ENCODE measurements at regions of chr13 and their contacts with region 1.

Region 1: DNA sequence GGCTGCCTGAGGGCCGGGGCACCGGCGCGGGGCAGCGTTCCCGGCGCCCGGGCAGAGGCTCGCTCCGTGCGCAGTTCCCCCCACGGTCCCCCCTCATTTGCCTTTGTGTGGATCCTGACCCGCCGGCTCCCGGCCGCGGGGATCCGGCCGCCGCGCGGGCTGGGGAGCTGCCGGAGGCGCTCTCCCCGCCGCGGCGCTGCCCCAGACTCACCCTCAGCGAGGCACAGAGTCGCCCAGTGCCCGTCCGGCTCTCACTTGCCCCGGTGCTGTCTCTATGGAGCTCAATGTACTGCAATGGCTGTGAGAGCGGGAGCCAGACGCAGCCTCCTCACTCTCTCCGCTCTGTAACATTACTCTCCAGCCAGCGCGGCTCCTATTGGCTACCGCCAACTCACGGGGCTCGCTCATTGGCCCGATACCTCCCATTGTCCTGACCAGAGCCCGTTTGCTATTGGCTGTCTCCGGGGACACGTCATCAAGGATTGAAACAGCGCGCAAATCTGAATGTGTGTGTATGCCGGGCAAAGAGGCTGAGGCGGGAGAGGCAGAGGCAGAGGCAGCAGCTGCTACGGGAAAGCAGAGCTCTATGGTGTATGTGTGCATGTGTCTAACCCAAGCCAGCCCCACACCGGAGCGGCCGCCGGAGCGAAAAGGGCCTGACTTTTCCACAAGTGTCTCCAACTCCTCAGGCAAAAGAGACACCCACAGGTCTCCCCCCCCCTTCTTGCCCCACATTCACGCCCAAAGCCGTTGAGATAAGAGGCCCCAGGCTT is at the start of gene HMGB1:
- DNase-seq: peak; percentile 97
- ATAC-seq: peak; percentile 82
- H3K4me3 ChIP-seq: peak within 1 kb of the TSS; percentile 21 to 86 (median 78)
- H3K4me3 Mint-ChIP-seq: peak within 1 kb of the TSS; percentile 98
- H3K27ac ChIP-seq: peak within 1 kb of the TSS; percentile 54 to 91
- H3K27ac Mint-ChIP-seq: peak within 1 kb of the TSS; percentile 100
- H3K4me1 ChIP-seq: peaks cover 33 to 38% of the 10 kb centered on the region in 2 donors
- H3K4me1 Mint-ChIP-seq: peaks cover 38% of the 10 kb centered on the region
- H3K27me3 ChIP-seq: no peaks in the 10 kb centered on the region
- H3K27me3 Mint-ChIP-seq: no peaks in the 10 kb centered on the region
- CTCF ChIP-seq: no peak
- total RNA-seq, gene HMGB1: 483 and 529 TPM in 2 replicates

Region 2: DNA sequence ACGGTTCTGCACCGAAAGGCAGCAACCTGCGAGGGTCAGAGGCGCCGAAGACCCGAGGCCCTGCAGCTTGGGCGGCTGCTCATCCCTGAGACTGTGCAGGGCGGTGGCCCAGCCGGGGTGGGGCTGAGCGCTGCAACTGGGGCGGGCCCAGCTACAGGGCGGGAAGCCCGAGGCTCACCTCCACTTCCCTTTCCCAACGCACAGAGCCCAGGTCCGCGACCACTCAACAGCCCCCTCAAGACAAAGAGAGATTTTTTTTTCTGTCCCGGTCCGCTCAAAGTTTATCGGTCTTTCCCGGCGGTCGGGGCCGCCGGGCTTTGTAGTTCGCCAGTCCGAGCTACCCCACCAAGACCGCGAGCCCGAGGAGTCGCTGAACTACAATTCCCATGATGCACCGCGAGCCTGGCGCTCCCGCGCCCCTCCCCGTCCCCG is 159.0 kb before region 1 on chr13:
- CTCF ChIA-PET with region 1: interaction called, 3 read pairs
- POLR2A ChIA-PET with region 1: no interaction called
- intact Hi-C with region 1: loop called (anchors 2 kb)
- DNase-seq: peak; percentile 96
- ATAC-seq: peak; percentile 89
- H3K4me3 ChIP-seq: peak overlapping the region; percentile 70 to 97 (median 83)
- H3K4me3 Mint-ChIP-seq: peak overlapping the region; percentile 85
- H3K27ac ChIP-seq: peak overlapping the region; percentile 71 to 87
- H3K27ac Mint-ChIP-seq: peak overlapping the region; percentile 86
- H3K4me1 ChIP-seq: peaks cover 28 to 45% of the 10 kb centered on the region in 2 donors
- H3K4me1 Mint-ChIP-seq: peaks cover 55% of the 10 kb centered on the region
- H3K27me3 ChIP-seq: no peaks in the 10 kb centered on the region
- H3K27me3 Mint-ChIP-seq: no peaks in the 10 kb centered on the region
- CTCF ChIP-seq: no peak

Region 3: DNA sequence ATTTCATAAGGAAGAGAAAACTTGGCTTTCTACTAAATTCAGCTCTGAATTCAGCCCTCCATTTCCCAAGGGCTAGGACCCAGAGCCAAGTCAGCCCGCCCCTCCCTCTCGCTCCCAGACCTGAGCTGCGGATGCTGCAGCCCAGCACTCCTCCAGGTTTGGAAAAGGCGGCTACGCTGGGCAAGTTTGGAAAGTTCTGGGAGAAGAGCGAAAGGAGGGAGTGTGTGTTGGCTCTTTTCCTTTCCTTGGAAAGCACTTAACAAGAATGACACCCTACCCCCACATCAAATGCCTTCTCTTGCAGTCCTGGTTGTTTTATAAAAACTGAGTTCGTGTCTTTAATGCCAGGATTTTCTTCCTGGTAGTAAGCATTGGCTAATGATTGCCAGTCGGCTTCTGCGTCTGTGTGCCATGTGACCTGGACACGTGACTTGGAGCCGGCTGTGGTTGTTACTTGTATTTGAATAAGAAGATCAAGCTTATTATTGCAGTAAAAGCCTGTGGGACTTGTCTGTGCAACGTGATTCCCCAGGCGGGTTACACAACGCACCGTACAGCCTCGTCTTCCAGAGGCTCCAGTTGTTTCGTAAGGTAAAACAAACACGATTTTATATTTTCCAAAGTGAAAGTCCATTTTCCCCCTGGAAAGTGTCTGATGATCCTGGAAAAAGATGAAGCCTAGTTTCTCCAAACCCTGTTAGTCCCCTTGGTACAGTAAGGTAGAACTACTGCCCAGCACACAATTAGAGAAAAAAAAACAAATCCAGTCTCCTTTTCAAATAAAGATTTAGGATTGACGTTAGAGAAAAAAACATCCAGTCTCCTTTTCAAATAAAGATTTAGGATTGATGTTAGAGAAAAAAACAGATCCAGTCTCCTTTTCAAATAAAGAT is 70.3 kb before region 1 on chr13:
- CTCF ChIA-PET with region 1: interaction called, 4 read pairs
- POLR2A ChIA-PET with region 1: interaction called, 7 read pairs
- intact Hi-C with region 1: loop called (anchors 2 kb)
- DNase-seq: peak; percentile 86
- ATAC-seq: peak; percentile 79
- H3K4me3 ChIP-seq: peak overlapping the region; percentile 62 to 96 (median 77)
- H3K4me3 Mint-ChIP-seq: peak overlapping the region; percentile 98
- H3K27ac ChIP-seq: peak overlapping the region; percentile 92
- H3K27ac Mint-ChIP-seq: peak overlapping the region; percentile 99
- H3K4me1 ChIP-seq: peaks cover 10 to 15% of the 10 kb centered on the region in 2 donors
- H3K4me1 Mint-ChIP-seq: peaks cover 24% of the 10 kb centered on the region
- H3K27me3 ChIP-seq: no peaks in the 10 kb centered on the region
- H3K27me3 Mint-ChIP-seq: no peaks in the 10 kb centered on the region
- CTCF ChIP-seq: no peak

Region 4: DNA sequence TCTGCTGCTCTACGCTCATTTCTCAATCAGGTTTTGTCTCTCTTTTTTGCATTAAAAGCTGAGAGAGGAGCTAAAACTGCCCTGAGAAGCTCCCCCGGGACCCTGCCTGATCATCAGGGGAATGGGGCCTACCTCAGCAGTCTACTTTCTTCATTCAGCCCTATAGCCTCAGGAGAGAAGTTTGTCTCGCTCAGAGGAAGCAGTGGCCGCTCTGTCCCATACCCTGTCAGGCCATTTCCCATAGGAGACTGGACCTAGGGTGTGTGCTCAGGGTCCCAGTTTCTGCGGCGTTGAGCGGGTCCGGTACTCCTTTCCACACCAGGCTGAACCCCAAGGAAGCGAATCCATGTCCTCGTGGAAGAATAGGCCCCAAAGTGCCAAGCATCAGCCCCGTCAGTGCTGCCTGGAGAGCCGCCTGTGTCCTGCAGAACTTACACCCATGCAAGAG is 21.8 kb before region 1 on chr13:
- CTCF ChIA-PET with region 1: interaction called, 13 read pairs
- POLR2A ChIA-PET with region 1: interaction called, 5 read pairs
- intact Hi-C with region 1: loop called (anchors 2 kb)
- DNase-seq: peak; percentile 83
- ATAC-seq: peak; percentile 87
- H3K4me3 ChIP-seq: peak overlapping the region in 4 of 5 experiments; percentile 4 to 44 (median 30)
- H3K4me3 Mint-ChIP-seq: peak overlapping the region; percentile 89
- H3K27ac ChIP-seq: peak overlapping the region; percentile 82 to 88
- H3K27ac Mint-ChIP-seq: peak overlapping the region; percentile 89
- H3K4me1 ChIP-seq: peaks cover 61 to 65% of the 10 kb centered on the region in 2 donors
- H3K4me1 Mint-ChIP-seq: peaks cover 64% of the 10 kb centered on the region
- H3K27me3 ChIP-seq: no peaks in the 10 kb centered on the region
- H3K27me3 Mint-ChIP-seq: no peaks in the 10 kb centered on the region
- CTCF ChIP-seq: no peak

Region 5: GRCh38 chr13:30739761-30740642 is 274.2 kb after region 1 on chr13:
- CTCF ChIA-PET with region 1: no interaction called
- POLR2A ChIA-PET with region 1: no interaction called
- intact Hi-C with region 1: loop called (anchors 1 kb)
- DNase-seq: peak; percentile 55
- ATAC-seq: peak; percentile 3
- H3K4me3 ChIP-seq: peak overlapping the region in 2 of 5 experiments; percentile 0 to 52
- H3K4me3 Mint-ChIP-seq: peak overlapping the region; percentile 84
- H3K27ac ChIP-seq: peak overlapping the region in 1 of 2 donors; percentile 45
- H3K27ac Mint-ChIP-seq: peak overlapping the region; percentile 78
- H3K4me1 ChIP-seq: peaks cover 69 to 82% of the 10 kb centered on the region in 2 donors
- H3K4me1 Mint-ChIP-seq: peaks cover 80% of the 10 kb centered on the region
- H3K27me3 ChIP-seq: no peaks in the 10 kb centered on the region
- H3K27me3 Mint-ChIP-seq: no peaks in the 10 kb centered on the region
- CTCF ChIP-seq: no peak

Measured in B cell (primary cell).